Esophagus muscularis mucosa (tissue), 4 donors: ENCODE measurements at regions of chrX and their contacts with region 1.

Region 1: DNA sequence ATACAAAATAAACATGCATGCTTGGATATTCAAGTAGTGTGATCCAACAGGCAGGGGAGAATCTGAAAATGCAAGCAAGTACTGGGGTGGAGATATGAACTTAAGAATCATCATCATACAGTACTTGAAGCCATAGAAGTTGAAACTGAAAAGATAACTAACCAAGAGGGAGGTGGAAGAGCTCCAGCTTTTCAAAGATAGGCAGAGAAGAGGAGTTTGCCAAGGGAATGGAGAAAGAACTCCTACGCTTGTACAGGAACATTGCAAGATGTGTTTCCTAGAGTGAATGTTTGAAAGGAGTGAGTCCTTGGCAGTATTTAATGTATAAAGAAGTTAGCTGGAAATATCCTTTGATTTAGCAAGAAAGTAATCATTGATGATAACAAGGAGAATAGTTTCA is 106.2 kb upstream of the FRMPD4 start:
- DNase-seq: no peak
- H3K4me3 ChIP-seq: no peak overlapping the region
- H3K27ac ChIP-seq: no peak overlapping the region
- H3K4me1 ChIP-seq: no peaks in the 10 kb centered on the region
- H3K27me3 ChIP-seq: no peaks in the 10 kb centered on the region
- CTCF ChIP-seq: no peak
- EP300 ChIP-seq: no peak
- POLR2A ChIP-seq: no peak

Region 2: DNA sequence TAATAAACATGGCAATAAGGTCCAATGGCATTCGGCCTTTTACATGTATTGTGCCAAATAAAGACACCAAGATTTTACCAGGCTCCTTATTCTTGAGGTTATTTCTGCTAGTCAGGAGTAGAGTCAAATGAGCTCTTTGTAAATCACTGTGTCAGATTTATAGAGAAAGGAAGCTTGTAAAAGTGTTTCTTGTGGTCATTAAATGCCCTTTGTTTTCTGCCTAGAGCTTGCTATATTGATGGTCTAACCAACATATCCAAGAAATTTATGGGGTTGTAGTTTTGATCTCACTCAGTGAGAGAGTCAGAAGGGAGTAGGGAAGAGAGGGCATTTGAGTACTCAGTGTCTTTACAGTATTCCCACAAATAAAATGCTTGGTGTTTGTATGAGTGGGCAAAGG is 20.0 kb after region 1 on chrX:
- intact Hi-C with region 1: loop called (anchors 1 kb)
- DNase-seq: no peak
- H3K4me3 ChIP-seq: no peak overlapping the region
- H3K27ac ChIP-seq: no peak overlapping the region
- H3K4me1 ChIP-seq: no peaks in the 10 kb centered on the region
- H3K27me3 ChIP-seq: no peaks in the 10 kb centered on the region
- CTCF ChIP-seq: no peak
- EP300 ChIP-seq: no peak
- POLR2A ChIP-seq: no peak

Region 3: DNA sequence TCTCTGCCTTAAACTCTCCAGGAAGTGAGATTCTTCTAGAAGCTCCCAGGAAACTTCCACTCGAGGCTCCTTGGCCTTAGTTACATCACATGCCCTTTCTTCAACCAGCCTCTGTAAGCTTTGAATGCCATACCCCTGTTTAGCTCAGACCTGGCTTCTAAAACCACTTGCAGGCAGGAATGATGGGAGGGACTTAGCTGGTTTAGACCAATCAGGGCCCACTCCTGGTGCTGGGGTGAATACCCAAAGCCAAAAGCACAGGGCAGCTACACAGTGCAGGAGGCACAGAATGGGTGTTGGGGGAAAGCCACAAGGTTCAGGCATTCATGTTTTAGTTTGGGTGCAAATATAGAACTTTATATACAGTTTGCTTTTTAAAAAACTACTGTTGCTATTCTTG is 402.4 kb after region 1 on chrX:
- intact Hi-C with region 1: no loop called
- DNase-seq: no peak
- H3K4me3 ChIP-seq: no peak overlapping the region
- H3K27ac ChIP-seq: no peak overlapping the region
- H3K4me1 ChIP-seq: no peaks in the 10 kb centered on the region
- H3K27me3 ChIP-seq: no peaks in the 10 kb centered on the region
- CTCF ChIP-seq: no peak
- EP300 ChIP-seq: no peak
- POLR2A ChIP-seq: no peak